ENCODE measurements at regions of chr18 and their contacts with region 1.

Region 1: GRCh38 chr18:45738658-45739057 is 14.7 kb downstream of the SLC14A1 start:
- DNase-seq: no peak
- ATAC-seq: no peak

Region 2: GRCh38 chr18:45775241-45775676 is 36.6 kb after region 1 on chr18:
- intact Hi-C with region 1: loop called (anchors 5 kb)
- DNase-seq: peak; percentile 79
- ATAC-seq: peak; percentile 85

Region 3: DNA sequence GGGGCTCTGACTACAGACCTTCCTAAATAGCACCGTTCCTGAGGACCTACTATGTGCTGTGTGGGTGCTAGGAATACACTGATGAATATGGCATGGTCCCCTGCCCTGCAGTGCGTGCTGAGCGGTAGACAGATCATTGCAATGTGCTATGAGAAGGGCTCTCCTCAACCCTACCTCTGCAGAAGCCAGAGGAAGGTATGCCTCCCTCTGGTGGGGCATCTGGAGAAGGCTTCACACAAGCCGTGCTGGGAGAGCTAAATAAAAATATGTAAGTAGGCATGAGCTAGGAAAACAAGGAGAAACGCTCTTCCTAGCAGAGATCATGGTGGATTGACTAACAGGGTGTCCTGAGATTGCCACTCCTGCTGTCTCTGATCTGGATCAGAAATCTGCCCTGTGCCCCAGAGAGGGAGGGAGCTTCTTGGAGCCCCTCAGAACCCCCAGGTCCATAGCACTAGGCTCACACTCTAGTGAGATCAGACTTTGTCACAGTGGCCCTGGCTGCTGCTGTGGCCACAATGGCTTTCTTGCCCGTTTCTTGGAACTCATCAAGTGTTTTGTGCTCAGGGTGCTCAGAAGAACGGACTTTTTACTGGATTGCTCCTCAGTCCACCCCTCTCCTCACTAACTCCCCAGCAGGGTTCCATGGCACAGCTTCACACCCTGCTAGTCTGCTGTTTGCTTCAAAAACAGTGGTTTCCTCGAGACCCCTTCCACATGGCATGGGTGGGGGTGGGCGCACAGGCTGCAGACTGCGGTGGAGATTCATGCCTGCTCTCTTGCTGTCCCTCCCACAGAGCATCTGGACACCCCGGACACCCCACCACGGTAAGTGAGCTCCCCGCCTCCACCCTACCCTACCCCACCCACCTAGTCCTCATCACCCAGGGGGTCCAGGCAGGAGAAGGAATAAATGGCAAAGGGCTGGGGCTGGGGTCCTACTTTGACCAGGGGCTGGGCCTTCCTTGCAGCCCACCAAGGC is 101.0 kb after region 1 on chr18:
- intact Hi-C with region 1: loop called (anchors 5 kb)
- DNase-seq: no peak
- ATAC-seq: peak; percentile 44

Measured in Right ventricle myocardium inferior (tissue), 1 donor.